ENCODE measurements at regions of chr11 and their contacts with region 1.

Region 1: DNA sequence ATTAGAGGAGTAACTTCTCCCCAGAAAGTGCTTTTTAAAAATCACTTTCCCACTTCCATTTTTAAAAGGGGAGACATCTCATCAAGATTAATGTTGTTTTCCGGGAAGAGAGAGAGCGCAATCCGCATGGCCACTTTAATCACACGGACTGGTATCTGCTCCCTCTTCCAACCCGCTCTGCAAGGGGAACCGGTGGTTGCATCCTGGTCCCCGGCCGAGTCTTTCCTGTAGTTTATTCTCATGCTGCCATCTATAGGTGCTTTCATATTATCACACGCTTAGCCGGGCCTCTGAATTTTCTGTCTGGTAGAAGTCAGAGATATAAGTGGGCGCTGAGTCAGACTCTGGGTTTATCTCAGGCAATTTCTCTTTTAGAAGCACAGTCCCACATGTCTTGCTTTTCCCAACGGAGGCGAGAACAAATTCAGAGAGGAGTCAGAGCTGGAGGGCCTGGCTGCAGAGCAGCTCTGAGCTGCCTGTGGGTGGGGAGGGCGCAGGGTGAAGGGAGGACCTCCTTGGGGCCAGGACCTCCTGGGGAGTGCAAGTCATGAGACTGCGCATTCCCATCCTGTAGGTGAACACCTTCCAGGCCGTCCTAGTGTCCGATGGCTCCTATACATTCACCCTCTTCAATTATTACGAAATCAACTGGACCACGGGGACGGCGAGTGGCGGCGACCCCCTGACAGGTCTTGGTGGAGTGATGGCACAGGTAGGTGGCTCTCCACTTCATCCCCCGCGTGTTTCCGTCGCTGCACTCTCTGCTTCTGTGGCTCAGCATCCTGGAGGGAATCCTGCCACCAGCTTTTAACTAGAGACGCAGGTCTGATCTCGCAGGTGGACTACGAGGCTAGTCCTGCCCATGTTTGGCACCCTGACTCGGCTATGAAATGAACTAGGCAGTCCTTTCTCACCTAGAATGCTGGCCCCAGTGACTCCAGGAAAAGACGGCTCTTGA is 11.7 kb downstream of the TECTA start:
- DNase-seq: peak; percentile 27 to 58
- ATAC-seq: peak; percentile 79 to 94
- H3K4me3 ChIP-seq: no peak overlapping the region
- H3K27ac ChIP-seq: no peak overlapping the region
- H3K4me1 ChIP-seq: peaks cover 0 to 3% of the 10 kb centered on the region in 2 donors
- H3K27me3 ChIP-seq: no peaks in the 10 kb centered on the region
- CTCF ChIP-seq: peak; percentile 23 to 60 (median 44)
- POLR2A ChIP-seq: no peak

Region 2: DNA sequence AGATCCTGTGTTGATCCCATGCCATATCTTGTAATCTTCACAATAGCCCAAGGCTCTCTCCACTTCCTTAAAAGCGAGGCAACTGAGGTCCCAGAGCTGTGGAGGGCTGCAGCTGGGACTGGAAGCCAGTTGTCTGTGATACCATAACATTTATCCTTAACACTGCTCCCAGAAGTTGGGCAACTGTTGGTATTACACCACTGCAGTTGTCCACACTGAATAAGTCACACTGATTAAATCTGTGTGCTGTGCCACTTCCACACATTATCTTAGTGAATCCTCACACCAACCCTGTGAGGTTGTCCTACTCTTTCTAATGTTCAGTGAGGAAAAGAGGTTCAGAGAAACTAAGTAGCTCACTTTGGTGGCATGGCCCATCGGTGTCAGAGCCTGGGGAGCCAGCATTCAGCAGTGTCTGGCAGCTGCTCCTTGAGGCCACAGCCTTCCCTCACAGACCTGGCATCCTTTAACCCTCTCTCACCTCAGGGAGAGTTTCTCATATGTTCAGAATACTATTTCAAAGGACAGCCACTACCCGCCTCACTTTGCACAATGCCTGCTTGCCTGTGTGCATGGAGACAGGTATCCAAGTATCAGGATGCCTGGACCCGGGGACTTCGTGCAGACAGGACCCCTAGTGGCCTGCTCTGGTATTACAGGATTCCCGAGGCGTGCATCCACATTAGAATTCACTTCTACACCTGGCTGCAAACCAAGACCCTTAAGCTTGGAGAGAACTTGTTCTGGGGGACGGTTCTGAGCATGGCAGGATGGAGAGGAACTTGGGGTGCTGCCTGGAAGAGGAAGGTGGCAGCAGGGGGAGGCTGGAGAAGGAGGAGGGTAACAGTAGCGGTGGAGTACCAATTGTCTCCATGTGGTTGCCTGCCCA is 310.7 kb before region 1 on chr11:
- in situ Hi-C with region 1: no loop called
- intact Hi-C with region 1: loop called (anchors 10 kb)
- DNase-seq: no peak
- ATAC-seq: peak; percentile 39 to 50
- H3K4me3 ChIP-seq: no peak overlapping the region
- H3K27ac ChIP-seq: no peak overlapping the region
- H3K4me1 ChIP-seq: no peaks in the 10 kb centered on the region
- H3K27me3 ChIP-seq: no peaks in the 10 kb centered on the region
- CTCF ChIP-seq: peak; percentile 33 to 77 (median 63)
- POLR2A ChIP-seq: no peak

Region 3: DNA sequence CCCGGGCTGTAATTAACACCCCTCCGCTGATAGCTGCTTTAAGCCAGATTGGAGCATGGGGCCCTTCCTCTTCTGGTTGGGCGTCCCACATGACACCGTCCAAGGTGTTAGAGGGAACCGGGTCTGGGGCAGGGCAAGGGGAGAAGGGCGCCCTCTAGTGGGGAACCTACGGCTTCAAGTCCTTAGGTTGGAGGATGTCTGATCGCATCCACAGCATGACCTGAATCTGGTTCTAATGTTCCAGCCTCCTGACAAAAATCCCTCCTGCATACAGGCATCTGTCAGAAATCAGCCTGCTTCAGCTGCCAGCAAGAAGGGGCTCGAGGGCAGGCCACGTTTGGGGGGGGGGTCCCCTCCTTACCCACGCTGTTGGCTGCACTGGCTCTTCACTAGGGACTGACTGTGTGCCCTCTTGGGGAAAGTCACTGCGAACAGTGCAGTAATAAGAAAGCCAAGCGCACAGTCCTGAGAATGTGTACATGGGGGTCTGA is 183.1 kb before region 1 on chr11:
- in situ Hi-C with region 1: no loop called
- intact Hi-C with region 1: loop called (anchors 5 kb)
- DNase-seq: no peak
- ATAC-seq: no peak
- H3K4me3 ChIP-seq: no peak overlapping the region
- H3K27ac ChIP-seq: no peak overlapping the region
- H3K4me1 ChIP-seq: no peaks in the 10 kb centered on the region
- H3K27me3 ChIP-seq: no peaks in the 10 kb centered on the region
- CTCF ChIP-seq: peak in 3 of 5 experiments; percentile 29 to 49 (median 37)
- POLR2A ChIP-seq: no peak

Region 4: GRCh38 chr11:120952461-120953434 is 160.0 kb before region 1 on chr11:
- in situ Hi-C with region 1: no loop called
- intact Hi-C with region 1: loop called (anchors 2 kb)
- DNase-seq: peak; percentile 35 to 57
- ATAC-seq: peak; percentile 86 to 87
- H3K4me3 ChIP-seq: peak overlapping the region in 2 of 4 donors; percentile 22 to 50
- H3K27ac ChIP-seq: no peak overlapping the region
- H3K4me1 ChIP-seq: peaks cover 0 to 5% of the 10 kb centered on the region in 2 donors
- H3K27me3 ChIP-seq: peaks cover 6 to 10% (median 10%) of the 10 kb centered on the region in 3 donors
- CTCF ChIP-seq: peak; percentile 44 to 74 (median 51)
- POLR2A ChIP-seq: no peak

Region 5: GRCh38 chr11:121048464-121049233 is 64.1 kb before region 1 on chr11:
- in situ Hi-C with region 1: no loop called
- intact Hi-C with region 1: no loop called
- DNase-seq: no peak
- ATAC-seq: no peak
- H3K4me3 ChIP-seq: no peak overlapping the region
- H3K27ac ChIP-seq: no peak overlapping the region
- H3K4me1 ChIP-seq: no peaks in the 10 kb centered on the region
- H3K27me3 ChIP-seq: no peaks in the 10 kb centered on the region
- CTCF ChIP-seq: no peak
- POLR2A ChIP-seq: no peak

Region 6: GRCh38 chr11:121129362-121130340 is 16.9 kb after region 1 on chr11:
- in situ Hi-C with region 1: no loop called
- intact Hi-C with region 1: no loop called
- DNase-seq: no peak
- ATAC-seq: no peak
- H3K4me3 ChIP-seq: no peak overlapping the region
- H3K27ac ChIP-seq: no peak overlapping the region
- H3K4me1 ChIP-seq: peaks cover 0 to 5% of the 10 kb centered on the region in 2 donors
- H3K27me3 ChIP-seq: no peaks in the 10 kb centered on the region
- CTCF ChIP-seq: no peak
- POLR2A ChIP-seq: no peak